ENCODE measurements at regions of chr6 and their contacts with region 1.

Region 1: GRCh38 chr6:41182069-41183034 is 18.6 kb downstream of the TREML2 start:
- DNase-seq: peak; percentile 94 to 97 (median 97)
- H3K4me3 ChIP-seq: no peak overlapping the region
- H3K4me3 Mint-ChIP-seq: peak overlapping the region in 1 of 2 donors; percentile 75
- H3K27ac ChIP-seq: peak overlapping the region; percentile 95 to 98
- H3K27ac Mint-ChIP-seq: peak overlapping the region; percentile 98 to 100 (median 99)
- H3K4me1 ChIP-seq: peaks cover 58 to 72% of the 10 kb centered on the region in 2 donors
- H3K4me1 Mint-ChIP-seq: peaks cover 73% of the 10 kb centered on the region
- H3K27me3 ChIP-seq: no peaks in the 10 kb centered on the region
- H3K27me3 Mint-ChIP-seq: peaks cover 0 to 2% (median 2%) of the 10 kb centered on the region in 3 donors
- CTCF ChIP-seq: peak; percentile 30

Region 2: GRCh38 chr6:41072676-41073623 is 109.4 kb before region 1 on chr6 and contains the start of gene NFYA:
- intact Hi-C with region 1: loop called in 1 of 2 experiments (anchors 5 kb)
- DNase-seq: peak in 2 of 3 donors; percentile 99 to 100
- H3K4me3 ChIP-seq: peak within 1 kb of the TSS; percentile 80 to 88 (median 88)
- H3K4me3 Mint-ChIP-seq: peak within 1 kb of the TSS; percentile 92 to 93
- H3K27ac ChIP-seq: peak within 1 kb of the TSS; percentile 96 to 98
- H3K27ac Mint-ChIP-seq: peak within 1 kb of the TSS; percentile 97 to 99 (median 98)
- H3K4me1 ChIP-seq: peaks cover 18 to 27% of the 10 kb centered on the region in 2 donors
- H3K4me1 Mint-ChIP-seq: peaks cover 29% of the 10 kb centered on the region
- H3K27me3 ChIP-seq: no peaks in the 10 kb centered on the region
- H3K27me3 Mint-ChIP-seq: no peaks in the 10 kb centered on the region
- CTCF ChIP-seq: peak; percentile 72
- polyA plus RNA-seq, gene NFYA: 9.7 to 21.4 (median 10.7) TPM

Region 3: GRCh38 chr6:41111036-41111435 is 71.3 kb before region 1 on chr6:
- intact Hi-C with region 1: no loop called
- DNase-seq: no peak
- H3K4me3 ChIP-seq: no peak overlapping the region
- H3K4me3 Mint-ChIP-seq: no peak overlapping the region
- H3K27ac ChIP-seq: no peak overlapping the region
- H3K27ac Mint-ChIP-seq: no peak overlapping the region
- H3K4me1 ChIP-seq: no peaks in the 10 kb centered on the region
- H3K4me1 Mint-ChIP-seq: no peaks in the 10 kb centered on the region
- H3K27me3 ChIP-seq: no peaks in the 10 kb centered on the region
- H3K27me3 Mint-ChIP-seq: peaks cover 0 to 1% (median 0%) of the 10 kb centered on the region in 3 donors
- CTCF ChIP-seq: no peak

Region 4: GRCh38 chr6:41132254-41132653 is 50.1 kb before region 1 on chr6:
- intact Hi-C with region 1: no loop called
- DNase-seq: no peak
- H3K4me3 ChIP-seq: no peak overlapping the region
- H3K4me3 Mint-ChIP-seq: no peak overlapping the region
- H3K27ac ChIP-seq: no peak overlapping the region
- H3K27ac Mint-ChIP-seq: no peak overlapping the region
- H3K4me1 ChIP-seq: no peaks in the 10 kb centered on the region
- H3K4me1 Mint-ChIP-seq: no peaks in the 10 kb centered on the region
- H3K27me3 ChIP-seq: no peaks in the 10 kb centered on the region
- H3K27me3 Mint-ChIP-seq: peaks cover 0 to 1% (median 0%) of the 10 kb centered on the region in 3 donors
- CTCF ChIP-seq: no peak

Region 5: DNA sequence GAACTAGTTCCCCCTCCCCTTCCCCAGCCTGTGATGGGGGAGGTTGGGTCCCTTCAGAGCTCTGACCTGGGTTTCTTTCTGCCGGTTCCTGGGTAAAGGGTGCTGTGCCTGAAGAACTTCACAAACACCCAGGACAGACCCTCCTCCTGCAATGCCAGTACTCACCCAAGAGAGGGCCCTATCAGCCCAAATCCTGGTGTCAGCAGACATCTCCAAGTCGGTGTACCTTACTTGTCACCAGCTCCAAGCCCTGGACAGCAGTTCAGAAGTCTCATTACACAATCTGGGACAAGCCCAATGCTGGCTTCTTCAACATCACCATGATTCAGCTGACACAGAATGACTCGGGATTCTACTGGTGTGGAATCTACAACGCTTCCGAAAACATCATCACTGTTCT is 46.3 kb after region 1 on chr6:
- intact Hi-C with region 1: loop called in 1 of 2 experiments (anchors 5 kb)
- DNase-seq: peak; percentile 82 to 99 (median 87)
- H3K4me3 ChIP-seq: peak overlapping the region in 1 of 3 experiments; percentile 51
- H3K4me3 Mint-ChIP-seq: no peak overlapping the region
- H3K27ac ChIP-seq: peak overlapping the region; percentile 60 to 98
- H3K27ac Mint-ChIP-seq: peak overlapping the region; percentile 85 to 96 (median 90)
- H3K4me1 ChIP-seq: peaks cover 19 to 29% of the 10 kb centered on the region in 2 donors
- H3K4me1 Mint-ChIP-seq: peaks cover 21% of the 10 kb centered on the region
- H3K27me3 ChIP-seq: no peaks in the 10 kb centered on the region
- H3K27me3 Mint-ChIP-seq: peaks cover 1 to 6% (median 2%) of the 10 kb centered on the region in 3 donors
- CTCF ChIP-seq: peak; percentile 66

Region 6: GRCh38 chr6:41286544-41287346 is 104.4 kb after region 1 on chr6 and contains the start of gene TREM1:
- intact Hi-C with region 1: loop called (anchors 5 to 10 kb)
- DNase-seq: peak; percentile 97 to 99 (median 99)
- H3K4me3 ChIP-seq: peak within 1 kb of the TSS; percentile 37 to 77 (median 76)
- H3K4me3 Mint-ChIP-seq: peak within 1 kb of the TSS; percentile 91 to 98
- H3K27ac ChIP-seq: peak within 1 kb of the TSS; percentile 100
- H3K27ac Mint-ChIP-seq: peak within 1 kb of the TSS; percentile 100
- H3K4me1 ChIP-seq: peaks cover 83 to 84% of the 10 kb centered on the region in 2 donors
- H3K4me1 Mint-ChIP-seq: peaks cover 85% of the 10 kb centered on the region
- H3K27me3 ChIP-seq: no peaks in the 10 kb centered on the region
- H3K27me3 Mint-ChIP-seq: peaks cover 0 to 12% (median 0%) of the 10 kb centered on the region in 3 donors
- CTCF ChIP-seq: no peak
- polyA plus RNA-seq, gene TREM1: 175 to 303 (median 240) TPM

Region 7: GRCh38 chr6:41306187-41306854 is 124.0 kb after region 1 on chr6:
- intact Hi-C with region 1: loop called in 1 of 2 experiments (anchors 5 kb)
- DNase-seq: peak in 2 of 3 donors; percentile 58 to 71
- H3K4me3 ChIP-seq: no peak overlapping the region
- H3K4me3 Mint-ChIP-seq: no peak overlapping the region
- H3K27ac ChIP-seq: no peak overlapping the region
- H3K27ac Mint-ChIP-seq: peak overlapping the region in 1 of 7 donors; percentile 25
- H3K4me1 ChIP-seq: peaks cover 10 to 25% of the 10 kb centered on the region in 2 donors
- H3K4me1 Mint-ChIP-seq: peaks cover 21% of the 10 kb centered on the region
- H3K27me3 ChIP-seq: peaks cover 0 to 2% of the 10 kb centered on the region in 2 donors
- H3K27me3 Mint-ChIP-seq: peaks cover 0 to 5% (median 5%) of the 10 kb centered on the region in 3 donors
- CTCF ChIP-seq: peak; percentile 80

Region 8: GRCh38 chr6:41356790-41357189 is 174.4 kb after region 1 on chr6:
- intact Hi-C with region 1: no loop called
- DNase-seq: no peak
- H3K4me3 ChIP-seq: no peak overlapping the region
- H3K4me3 Mint-ChIP-seq: no peak overlapping the region
- H3K27ac ChIP-seq: no peak overlapping the region
- H3K27ac Mint-ChIP-seq: no peak overlapping the region
- H3K4me1 ChIP-seq: no peaks in the 10 kb centered on the region
- H3K4me1 Mint-ChIP-seq: no peaks in the 10 kb centered on the region
- H3K27me3 ChIP-seq: no peaks in the 10 kb centered on the region
- H3K27me3 Mint-ChIP-seq: peaks cover 11 to 21% (median 16%) of the 10 kb centered on the region in 3 donors
- CTCF ChIP-seq: no peak

Region 9: GRCh38 chr6:41505122-41506049 is 323.0 kb after region 1 on chr6:
- intact Hi-C with region 1: no loop called
- DNase-seq: no peak
- H3K4me3 ChIP-seq: no peak overlapping the region
- H3K4me3 Mint-ChIP-seq: peak overlapping the region in 1 of 2 donors; percentile 62
- H3K27ac ChIP-seq: no peak overlapping the region
- H3K27ac Mint-ChIP-seq: no peak overlapping the region
- H3K4me1 ChIP-seq: peaks cover 0 to 4% of the 10 kb centered on the region in 2 donors
- H3K4me1 Mint-ChIP-seq: peaks cover 18% of the 10 kb centered on the region
- H3K27me3 ChIP-seq: peaks cover 46 to 66% of the 10 kb centered on the region in 2 donors
- H3K27me3 Mint-ChIP-seq: peaks cover 63 to 82% (median 67%) of the 10 kb centered on the region in 3 donors
- CTCF ChIP-seq: no peak